Activated CD4-positive, alpha-beta memory T cell treated with anti-CD3 and anti-CD28 coated beads, Interleukin-2, amount 10 ng/mL, durations not matched to agents 7 days and 5 days (primary cell): ENCODE measurements at regions of chr20 and their contacts with region 1.

Region 1: GRCh38 chr20:18507218-18508021 is at the start of gene SEC23B:
- DNase-seq: peak; percentile 98
- H3K4me3 Mint-ChIP-seq: peak within 1 kb of the TSS; percentile 99
- H3K27ac Mint-ChIP-seq: peak within 1 kb of the TSS; percentile 99
- H3K4me1 Mint-ChIP-seq: peaks cover 53% of the 10 kb centered on the region
- H3K27me3 Mint-ChIP-seq: no peaks in the 10 kb centered on the region
- total RNA-seq, gene SEC23B: 95.2 to 101 TPM

Region 2: DNA sequence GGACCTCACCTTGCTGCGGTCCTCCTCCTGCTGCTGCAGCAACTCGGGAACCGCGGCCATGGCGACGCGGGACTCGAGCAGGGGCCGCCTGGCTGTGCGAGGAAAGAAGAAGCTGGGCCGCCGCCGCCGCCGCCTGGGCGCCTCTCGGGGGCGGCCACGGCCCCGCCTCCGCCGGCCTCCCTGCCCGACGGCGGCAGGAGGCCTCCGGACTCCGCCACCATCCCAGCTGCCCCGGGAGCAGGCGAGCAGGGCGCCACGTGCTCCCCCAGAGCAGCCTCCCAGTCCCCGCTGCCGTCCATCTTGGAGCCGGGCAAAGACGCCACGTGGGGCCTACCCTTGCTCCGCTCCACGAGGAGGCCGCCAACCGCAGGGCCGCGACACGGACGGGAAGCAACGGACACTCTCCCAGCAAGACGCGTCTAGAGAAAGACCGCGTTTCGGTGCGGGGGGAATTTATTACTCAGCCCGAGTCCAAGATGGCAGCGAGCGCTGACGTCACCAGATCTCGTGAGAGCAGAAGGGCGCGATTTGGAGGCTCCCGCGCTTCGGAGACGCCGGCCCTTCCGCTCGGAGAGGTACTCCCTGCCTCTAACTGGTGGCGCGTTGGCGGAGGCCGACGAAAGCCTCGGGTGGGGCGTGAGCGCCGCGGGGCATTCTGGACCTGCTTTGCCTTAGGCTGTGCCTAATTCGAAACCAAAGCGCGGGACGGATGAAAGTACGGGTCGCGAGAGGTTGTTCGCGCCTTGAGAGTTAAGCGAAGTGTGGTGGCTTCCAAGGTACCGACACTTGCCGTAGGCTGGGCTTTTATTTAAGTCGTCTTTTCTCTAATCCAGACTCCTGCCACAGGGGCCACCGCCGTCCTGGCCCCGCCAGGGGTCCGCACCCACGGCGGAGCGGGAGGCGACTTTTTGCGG is 538.8 kb before region 1 on chr20 and contains the starts of genes MGME1 and SNX5:
- CTCF ChIA-PET with region 1: no interaction called
- POLR2A ChIA-PET with region 1: interaction called, 16 read pairs
- DNase-seq: peak; percentile 100
- H3K4me3 Mint-ChIP-seq: peak within 1 kb of the TSS; percentile 97
- H3K27ac Mint-ChIP-seq: peak within 1 kb of the TSS; percentile 98
- H3K4me1 Mint-ChIP-seq: peaks cover 34% of the 10 kb centered on the region
- H3K27me3 Mint-ChIP-seq: no peaks in the 10 kb centered on the region
- total RNA-seq, gene MGME1: 53.9 to 56.7 TPM
- total RNA-seq, gene SNX5: 236 to 250 TPM

Region 3: DNA sequence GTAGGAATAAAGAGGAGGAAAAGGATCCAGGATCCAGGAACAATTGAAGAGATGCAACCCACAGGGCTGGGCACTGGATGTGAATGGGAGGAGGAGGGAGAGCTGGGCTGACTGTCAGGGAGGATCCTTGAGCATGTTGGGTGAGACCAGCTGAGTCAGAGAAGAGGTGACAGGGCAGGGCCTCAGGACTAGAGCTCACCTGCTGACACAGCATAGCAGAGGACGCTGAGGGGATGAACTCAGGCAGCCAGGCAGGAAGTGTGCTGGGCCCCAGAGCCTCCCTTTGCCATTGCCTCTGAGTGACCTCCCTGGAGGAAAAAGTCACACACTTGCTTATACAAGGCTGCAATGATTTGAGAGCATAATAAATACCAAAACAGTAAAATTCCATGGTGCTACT is 146.8 kb before region 1 on chr20:
- CTCF ChIA-PET with region 1: no interaction called
- POLR2A ChIA-PET with region 1: no interaction called
- DNase-seq: no peak
- H3K4me3 Mint-ChIP-seq: no peak overlapping the region
- H3K27ac Mint-ChIP-seq: no peak overlapping the region
- H3K4me1 Mint-ChIP-seq: peaks cover 5% of the 10 kb centered on the region
- H3K27me3 Mint-ChIP-seq: peaks cover under 1% of the 10 kb centered on the region

Region 4: DNA sequence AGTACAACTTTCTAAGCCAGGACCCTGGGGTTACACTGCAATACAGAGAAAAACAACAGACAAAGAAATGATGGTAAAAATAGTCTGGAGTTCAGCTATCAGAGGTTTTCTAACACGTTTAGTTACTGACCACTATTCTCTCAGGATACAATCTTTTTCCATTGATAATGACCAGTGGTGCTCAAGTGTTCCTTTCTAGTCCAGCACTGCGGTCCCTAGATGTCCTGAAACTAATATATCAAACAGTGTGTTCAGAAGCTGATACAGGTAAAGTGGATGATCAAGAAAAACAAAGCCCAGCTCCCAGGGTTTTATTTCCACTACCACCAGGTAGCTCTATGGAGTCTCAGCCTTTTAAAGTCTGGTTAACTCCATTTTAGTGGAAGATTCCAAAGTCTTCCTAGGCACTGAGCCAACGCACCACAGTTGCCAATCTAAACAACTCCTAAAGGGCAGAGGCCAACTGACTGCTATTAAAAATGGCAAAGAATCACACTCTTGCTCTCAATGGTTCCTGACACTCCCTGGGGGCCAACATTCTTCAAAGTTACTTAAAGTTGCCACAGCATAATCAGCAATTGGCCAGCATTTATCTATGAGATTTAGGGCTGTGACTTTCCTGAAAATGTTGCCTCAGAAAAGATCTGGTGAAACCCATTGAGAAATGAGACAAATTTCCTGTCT is 78.8 kb before region 1 on chr20:
- CTCF ChIA-PET with region 1: no interaction called
- POLR2A ChIA-PET with region 1: no interaction called
- DNase-seq: no peak
- H3K4me3 Mint-ChIP-seq: no peak overlapping the region
- H3K27ac Mint-ChIP-seq: no peak overlapping the region
- H3K4me1 Mint-ChIP-seq: no peaks in the 10 kb centered on the region
- H3K27me3 Mint-ChIP-seq: no peaks in the 10 kb centered on the region

Region 5: DNA sequence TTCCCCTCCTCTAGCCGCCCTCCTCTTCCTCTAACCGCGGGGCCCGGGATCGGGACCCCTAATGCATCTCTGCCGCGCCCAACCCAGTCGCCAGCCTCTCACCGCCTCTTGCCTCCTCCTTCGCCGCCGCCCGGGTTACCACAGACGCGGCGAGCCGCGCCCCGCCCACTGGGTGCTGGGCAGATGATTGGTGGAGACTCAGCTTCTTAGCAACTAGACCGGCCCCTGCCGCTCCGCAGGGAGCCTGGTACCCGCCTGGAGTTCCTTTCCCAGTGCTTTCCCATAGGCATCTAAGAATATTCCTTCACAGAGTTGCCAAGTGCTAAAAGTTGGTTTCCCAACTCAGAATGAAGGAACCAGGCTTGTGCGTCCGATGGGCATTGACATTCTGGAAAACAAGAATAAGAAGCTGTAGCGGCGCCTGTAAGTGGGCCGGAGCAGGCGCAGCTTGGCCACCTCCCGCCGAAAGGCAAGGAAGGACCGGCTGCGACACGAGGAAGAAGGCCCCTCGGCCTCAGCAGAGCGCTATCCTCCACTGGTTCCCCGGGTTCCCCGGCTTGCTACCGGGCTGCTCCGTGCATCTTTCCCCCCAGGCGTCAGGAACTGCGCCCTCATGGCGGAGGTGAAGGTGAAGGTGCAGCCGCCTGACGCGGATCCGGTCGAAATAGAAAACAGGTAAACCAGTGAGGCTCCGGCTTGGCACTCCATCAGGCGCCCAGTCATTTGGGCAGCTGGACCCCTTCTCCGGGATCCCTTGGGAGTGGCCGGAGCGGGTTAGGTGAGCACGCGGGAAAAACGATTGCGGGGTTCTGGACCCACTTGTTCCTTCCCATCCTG is 40.3 kb before region 1 on chr20 and contains the starts of genes DZANK1 and POLR3F:
- CTCF ChIA-PET with region 1: interaction called, 21 read pairs
- POLR2A ChIA-PET with region 1: interaction called, 89 read pairs
- DNase-seq: peak; percentile 94
- H3K4me3 Mint-ChIP-seq: peak within 1 kb of the TSS; percentile 95
- H3K27ac Mint-ChIP-seq: peak within 1 kb of the TSS; percentile 81
- H3K4me1 Mint-ChIP-seq: peaks cover 30% of the 10 kb centered on the region
- H3K27me3 Mint-ChIP-seq: no peaks in the 10 kb centered on the region
- total RNA-seq, gene DZANK1: 1.4 to 1.5 TPM
- total RNA-seq, gene POLR3F: 7.7 to 10.1 TPM

Region 6: GRCh38 chr20:18527836-18528235 is 20.4 kb after region 1 on chr20:
- CTCF ChIA-PET with region 1: no interaction called
- POLR2A ChIA-PET with region 1: interaction called, 11 read pairs
- DNase-seq: no peak
- H3K4me3 Mint-ChIP-seq: no peak overlapping the region
- H3K27ac Mint-ChIP-seq: no peak overlapping the region
- H3K4me1 Mint-ChIP-seq: no peaks in the 10 kb centered on the region
- H3K27me3 Mint-ChIP-seq: no peaks in the 10 kb centered on the region

Region 7: GRCh38 chr20:18587665-18588573 is 80.5 kb after region 1 on chr20 and contains the start of gene DTD1:
- CTCF ChIA-PET with region 1: interaction called, 3 read pairs
- POLR2A ChIA-PET with region 1: interaction called, 16 read pairs
- DNase-seq: peak; percentile 91
- H3K4me3 Mint-ChIP-seq: peak within 1 kb of the TSS; percentile 89
- H3K27ac Mint-ChIP-seq: peak within 1 kb of the TSS; percentile 73
- H3K4me1 Mint-ChIP-seq: peaks cover 27% of the 10 kb centered on the region
- H3K27me3 Mint-ChIP-seq: peaks cover 6% of the 10 kb centered on the region
- total RNA-seq, gene DTD1: 28.6 to 33.4 TPM